Activated B cell treated with CpG ODN at 0.5 μM for 24 hours (primary cell): ENCODE measurements at regions of chr22 and their contacts with region 1.

Region 1: GRCh38 chr22:40036591-40037225 is 42.0 kb downstream of the FAM83F start:
- DNase-seq: peak; percentile 43
- ATAC-seq: peak; percentile 95
- H3K4me3 Mint-ChIP-seq: no peak overlapping the region
- H3K27ac Mint-ChIP-seq: no peak overlapping the region
- H3K4me1 Mint-ChIP-seq: no peaks in the 10 kb centered on the region
- H3K27me3 Mint-ChIP-seq: peaks cover 19% of the 10 kb centered on the region
- CTCF ChIP-seq: no peak

Region 2: DNA sequence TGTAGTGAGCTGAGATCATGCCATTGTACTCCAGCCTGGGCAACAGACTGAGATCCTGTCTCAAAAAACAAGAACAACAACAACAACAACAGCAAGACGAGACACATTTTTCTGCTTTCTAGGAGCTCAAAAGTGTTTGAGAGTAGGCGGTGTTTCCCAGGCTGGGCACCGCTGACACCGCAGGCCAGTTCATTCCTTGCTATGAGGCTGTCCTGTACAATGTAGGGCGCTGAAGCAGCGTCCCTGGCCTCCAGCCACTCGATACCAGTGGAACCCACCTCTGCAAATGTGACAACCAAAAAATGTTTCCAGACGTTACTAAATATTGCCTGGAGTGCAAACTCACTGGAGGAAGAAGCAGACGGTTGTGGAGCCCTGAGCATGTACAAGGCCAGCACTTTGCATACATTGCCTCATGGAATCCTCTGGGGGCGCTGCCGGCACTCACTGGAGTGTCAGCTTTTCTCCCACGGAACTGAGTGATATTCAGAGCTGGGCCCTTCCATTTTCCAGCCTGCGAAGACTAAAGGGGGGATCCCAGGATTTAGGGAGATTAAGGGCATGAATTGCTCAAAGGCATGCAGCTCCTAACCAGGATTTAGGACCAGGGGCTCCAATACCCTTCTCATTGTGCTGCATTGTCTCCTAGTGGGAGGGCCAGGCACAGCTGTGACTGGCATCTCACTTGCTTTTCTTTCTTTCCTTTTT is 540.4 kb before region 1 on chr22:
- CTCF ChIA-PET with region 1: interaction called, 9 read pairs
- POLR2A ChIA-PET with region 1: no interaction called
- intact Hi-C with region 1: loop called (anchors 1 kb)
- DNase-seq: peak; percentile 33
- ATAC-seq: peak; percentile 77
- H3K4me3 Mint-ChIP-seq: no peak overlapping the region
- H3K27ac Mint-ChIP-seq: peak overlapping the region; percentile 41
- H3K4me1 Mint-ChIP-seq: peaks cover 16% of the 10 kb centered on the region
- H3K27me3 Mint-ChIP-seq: no peaks in the 10 kb centered on the region
- CTCF ChIP-seq: peak; percentile 51

Region 3: GRCh38 chr22:39543095-39543494 is 493.6 kb before region 1 on chr22:
- CTCF ChIA-PET with region 1: interaction called, 12 read pairs
- POLR2A ChIA-PET with region 1: no interaction called
- intact Hi-C with region 1: no loop called
- DNase-seq: no peak
- ATAC-seq: peak; percentile 54
- H3K4me3 Mint-ChIP-seq: no peak overlapping the region
- H3K27ac Mint-ChIP-seq: no peak overlapping the region
- H3K4me1 Mint-ChIP-seq: peaks cover 4% of the 10 kb centered on the region
- H3K27me3 Mint-ChIP-seq: peaks cover 37% of the 10 kb centered on the region
- CTCF ChIP-seq: no peak

Region 4: GRCh38 chr22:39960791-39961746 is 75.6 kb before region 1 on chr22:
- CTCF ChIA-PET with region 1: no interaction called
- POLR2A ChIA-PET with region 1: no interaction called
- intact Hi-C with region 1: no loop called
- DNase-seq: no peak
- ATAC-seq: peak; percentile 70
- H3K4me3 Mint-ChIP-seq: no peak overlapping the region
- H3K27ac Mint-ChIP-seq: no peak overlapping the region
- H3K4me1 Mint-ChIP-seq: peaks cover 32% of the 10 kb centered on the region
- H3K27me3 Mint-ChIP-seq: peaks cover 10% of the 10 kb centered on the region
- CTCF ChIP-seq: no peak

Region 5: GRCh38 chr22:40014667-40015248 is 21.9 kb before region 1 on chr22:
- CTCF ChIA-PET with region 1: no interaction called
- POLR2A ChIA-PET with region 1: no interaction called
- intact Hi-C with region 1: no loop called
- DNase-seq: no peak
- ATAC-seq: no peak
- H3K4me3 Mint-ChIP-seq: no peak overlapping the region
- H3K27ac Mint-ChIP-seq: no peak overlapping the region
- H3K4me1 Mint-ChIP-seq: no peaks in the 10 kb centered on the region
- H3K27me3 Mint-ChIP-seq: peaks cover 27% of the 10 kb centered on the region
- CTCF ChIP-seq: no peak